MCF 10A (cell line): ENCODE measurements at regions of chr7 and their contacts with region 1.

Region 1: GRCh38 chr7:23938937-23939552 is 229.0 kb downstream of the STK31 start:
- DNase-seq: peak; percentile 59
- H3K4me3 Mint-ChIP-seq: no peak overlapping the region
- H3K27ac Mint-ChIP-seq: no peak overlapping the region
- H3K4me1 Mint-ChIP-seq: no peaks in the 10 kb centered on the region
- H3K27me3 Mint-ChIP-seq: no peaks in the 10 kb centered on the region
- CTCF ChIP-seq: peak; percentile 37

Region 2: GRCh38 chr7:23654508-23654907 is 284.5 kb before region 1 on chr7:
- CTCF ChIA-PET with region 1: no interaction called
- POLR2A ChIA-PET with region 1: no interaction called
- intact Hi-C with region 1: no loop called
- DNase-seq: peak; percentile 25
- H3K4me3 Mint-ChIP-seq: no peak overlapping the region
- H3K27ac Mint-ChIP-seq: no peak overlapping the region
- H3K4me1 Mint-ChIP-seq: no peaks in the 10 kb centered on the region
- H3K27me3 Mint-ChIP-seq: no peaks in the 10 kb centered on the region
- CTCF ChIP-seq: no peak

Region 3: GRCh38 chr7:24290004-24290641 is 351.1 kb after region 1 on chr7:
- CTCF ChIA-PET with region 1: no interaction called
- POLR2A ChIA-PET with region 1: no interaction called
- intact Hi-C with region 1: loop called (anchors 5 kb)
- DNase-seq: peak; percentile 74
- H3K4me3 Mint-ChIP-seq: no peak overlapping the region
- H3K27ac Mint-ChIP-seq: no peak overlapping the region
- H3K4me1 Mint-ChIP-seq: peaks cover 6% of the 10 kb centered on the region
- H3K27me3 Mint-ChIP-seq: peaks cover 14% of the 10 kb centered on the region
- CTCF ChIP-seq: peak; percentile 64